ENCODE measurements at regions of chr7 and their contacts with region 1.

Region 1: DNA sequence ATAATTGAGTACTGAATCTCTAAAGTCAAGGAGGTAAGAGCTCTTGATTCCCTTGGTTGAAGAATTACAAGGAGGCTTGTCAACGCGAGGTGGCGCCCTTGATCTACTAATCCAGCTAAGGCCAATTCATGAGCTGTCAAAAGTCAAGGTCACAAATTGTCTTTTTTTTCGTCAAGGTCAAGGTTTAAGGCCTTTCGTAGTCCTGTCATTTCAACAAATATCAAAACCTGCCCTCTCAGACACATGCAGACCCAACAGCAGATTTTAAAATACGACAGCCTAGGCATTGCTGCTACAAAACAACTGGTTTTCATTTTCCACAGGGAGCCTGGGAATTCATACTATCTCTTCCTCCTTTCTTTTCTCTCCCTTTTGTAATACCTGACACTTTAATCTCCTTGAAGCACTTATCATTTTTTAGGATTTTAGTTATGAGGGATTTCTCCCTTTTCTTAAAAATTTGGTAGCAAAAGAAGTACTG is 3.6 kb downstream of the HOXA13 start:
- DNase-seq: peak; percentile 92
- ATAC-seq: no peak
- H3K4me3 Mint-ChIP-seq: no peak overlapping the region
- H3K27ac Mint-ChIP-seq: no peak overlapping the region
- H3K4me1 Mint-ChIP-seq: peaks cover 24% of the 10 kb centered on the region
- H3K27me3 Mint-ChIP-seq: peaks cover 72% of the 10 kb centered on the region

Region 2: GRCh38 chr7:27010068-27010467 is 186.3 kb before region 1 on chr7:
- CTCF ChIA-PET with region 1: no interaction called
- POLR2A ChIA-PET with region 1: no interaction called
- intact Hi-C with region 1: no loop called
- DNase-seq: no peak
- ATAC-seq: no peak
- H3K4me3 Mint-ChIP-seq: no peak overlapping the region
- H3K27ac Mint-ChIP-seq: no peak overlapping the region
- H3K4me1 Mint-ChIP-seq: no peaks in the 10 kb centered on the region
- H3K27me3 Mint-ChIP-seq: peaks cover 19% of the 10 kb centered on the region

Region 3: GRCh38 chr7:27031289-27032172 is 164.8 kb before region 1 on chr7:
- CTCF ChIA-PET with region 1: no interaction called
- POLR2A ChIA-PET with region 1: no interaction called
- intact Hi-C with region 1: no loop called
- DNase-seq: no peak
- ATAC-seq: peak; percentile 84
- H3K4me3 Mint-ChIP-seq: peak overlapping the region; percentile 22
- H3K27ac Mint-ChIP-seq: peak overlapping the region; percentile 80
- H3K4me1 Mint-ChIP-seq: peaks cover 24% of the 10 kb centered on the region
- H3K27me3 Mint-ChIP-seq: no peaks in the 10 kb centered on the region

Region 4: GRCh38 chr7:27172823-27173510 is 23.4 kb before region 1 on chr7:
- CTCF ChIA-PET with region 1: interaction called, 5 read pairs
- POLR2A ChIA-PET with region 1: no interaction called
- intact Hi-C with region 1: loop called (anchors 2 to 5 kb)
- DNase-seq: peak; percentile 31
- ATAC-seq: peak; percentile 14
- H3K4me3 Mint-ChIP-seq: no peak overlapping the region
- H3K27ac Mint-ChIP-seq: no peak overlapping the region
- H3K4me1 Mint-ChIP-seq: peaks cover 15% of the 10 kb centered on the region
- H3K27me3 Mint-ChIP-seq: peaks cover 56% of the 10 kb centered on the region

Region 5: GRCh38 chr7:27185013-27185855 is 11.1 kb before region 1 on chr7 and contains the start of gene HOXA11:
- CTCF ChIA-PET with region 1: interaction called, 22 read pairs
- POLR2A ChIA-PET with region 1: no interaction called
- intact Hi-C with region 1: loop called in 1 of 2 experiments (anchors 2 kb)
- DNase-seq: no peak
- ATAC-seq: no peak
- H3K4me3 Mint-ChIP-seq: peak within 1 kb of the TSS; percentile 69
- H3K27ac Mint-ChIP-seq: peak within 1 kb of the TSS; percentile 6
- H3K4me1 Mint-ChIP-seq: peaks cover 37% of the 10 kb centered on the region
- H3K27me3 Mint-ChIP-seq: peaks cover 70% of the 10 kb centered on the region
- total RNA-seq, gene HOXA11: not detected

Region 6: GRCh38 chr7:27262121-27262520 is 65.8 kb after region 1 on chr7:
- CTCF ChIA-PET with region 1: no interaction called
- POLR2A ChIA-PET with region 1: no interaction called
- intact Hi-C with region 1: no loop called
- DNase-seq: no peak
- ATAC-seq: no peak
- H3K4me3 Mint-ChIP-seq: no peak overlapping the region
- H3K27ac Mint-ChIP-seq: no peak overlapping the region
- H3K4me1 Mint-ChIP-seq: no peaks in the 10 kb centered on the region
- H3K27me3 Mint-ChIP-seq: peaks cover 22% of the 10 kb centered on the region

Region 7: GRCh38 chr7:27576360-27576944 is 380.1 kb after region 1 on chr7:
- CTCF ChIA-PET with region 1: interaction called, 11 read pairs
- POLR2A ChIA-PET with region 1: no interaction called
- intact Hi-C with region 1: loop called (anchors 1 kb)
- DNase-seq: no peak
- ATAC-seq: no peak
- H3K4me3 Mint-ChIP-seq: no peak overlapping the region
- H3K27ac Mint-ChIP-seq: no peak overlapping the region
- H3K4me1 Mint-ChIP-seq: no peaks in the 10 kb centered on the region
- H3K27me3 Mint-ChIP-seq: no peaks in the 10 kb centered on the region

Region 8: GRCh38 chr7:27784393-27785053 is 588.2 kb after region 1 on chr7:
- CTCF ChIA-PET with region 1: interaction called, 9 read pairs
- POLR2A ChIA-PET with region 1: no interaction called
- intact Hi-C with region 1: loop called (anchors 5 kb)
- DNase-seq: peak; percentile 18
- ATAC-seq: peak; percentile 77
- H3K4me3 Mint-ChIP-seq: no peak overlapping the region
- H3K27ac Mint-ChIP-seq: no peak overlapping the region
- H3K4me1 Mint-ChIP-seq: peaks cover 31% of the 10 kb centered on the region
- H3K27me3 Mint-ChIP-seq: no peaks in the 10 kb centered on the region

Region 9: DNA sequence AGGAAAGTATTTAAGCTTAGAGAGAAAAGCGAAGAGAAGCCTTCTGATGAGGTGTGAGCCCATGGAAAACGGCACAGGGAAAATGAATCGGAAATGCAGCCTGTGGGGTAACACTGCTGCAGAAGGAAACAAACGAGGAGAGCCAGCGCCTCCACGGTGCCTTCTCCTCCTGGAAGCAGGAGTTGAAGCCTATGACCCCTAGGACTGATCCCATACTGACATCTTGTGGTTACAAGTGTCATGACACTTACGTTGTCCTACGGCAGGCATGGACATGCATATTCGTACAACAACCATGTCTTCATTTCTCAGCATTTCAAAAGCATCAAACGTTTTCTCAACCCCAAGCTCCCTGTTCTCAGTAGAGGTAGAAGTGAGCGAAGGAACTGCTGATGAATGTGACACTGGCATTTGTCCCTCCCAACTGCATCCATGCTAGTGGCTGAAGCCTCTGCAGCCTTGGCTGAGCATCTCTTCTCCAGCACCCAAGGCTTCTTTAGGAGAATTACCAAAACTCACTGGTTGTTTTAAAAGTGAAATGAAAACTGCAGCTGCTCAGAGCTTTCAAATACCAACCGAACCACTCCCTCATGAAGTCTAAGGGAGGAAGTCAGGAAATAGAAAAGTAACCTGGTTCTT is 824.1 kb after region 1 on chr7:
- CTCF ChIA-PET with region 1: interaction called, 8 read pairs
- POLR2A ChIA-PET with region 1: interaction called, 3 read pairs
- intact Hi-C with region 1: loop called (anchors 1 to 2 kb)
- DNase-seq: peak; percentile 44
- ATAC-seq: peak; percentile 89
- H3K4me3 Mint-ChIP-seq: no peak overlapping the region
- H3K27ac Mint-ChIP-seq: no peak overlapping the region
- H3K4me1 Mint-ChIP-seq: no peaks in the 10 kb centered on the region
- H3K27me3 Mint-ChIP-seq: no peaks in the 10 kb centered on the region

Region 10: GRCh38 chr7:28096713-28097112 is 900.4 kb after region 1 on chr7:
- CTCF ChIA-PET with region 1: interaction called, 22 read pairs
- POLR2A ChIA-PET with region 1: no interaction called
- intact Hi-C with region 1: loop called (anchors 2 to 5 kb)
- DNase-seq: peak; percentile 60
- ATAC-seq: peak; percentile 63
- H3K4me3 Mint-ChIP-seq: no peak overlapping the region
- H3K27ac Mint-ChIP-seq: no peak overlapping the region
- H3K4me1 Mint-ChIP-seq: peaks cover 10% of the 10 kb centered on the region
- H3K27me3 Mint-ChIP-seq: no peaks in the 10 kb centered on the region

Measured in activated CD4-positive, alpha-beta T cell treated with anti-CD3 and anti-CD28 coated beads for 36 hours (primary cell).